WTC11 (cell line): ENCODE measurements at regions of chr1 and their contacts with region 1.

Region 1: GRCh38 chr1:27044613-27045151 is 32.0 kb upstream of the TENT5B start:
- DNase-seq: peak; percentile 97
- ATAC-seq: peak; percentile 78
- H3K4me3 Mint-ChIP-seq: peak overlapping the region; percentile 29
- H3K27ac Mint-ChIP-seq: no peak overlapping the region
- H3K4me1 Mint-ChIP-seq: peaks cover 58% of the 10 kb centered on the region
- H3K27me3 Mint-ChIP-seq: no peaks in the 10 kb centered on the region
- CTCF ChIP-seq: peak; percentile 97

Region 2: DNA sequence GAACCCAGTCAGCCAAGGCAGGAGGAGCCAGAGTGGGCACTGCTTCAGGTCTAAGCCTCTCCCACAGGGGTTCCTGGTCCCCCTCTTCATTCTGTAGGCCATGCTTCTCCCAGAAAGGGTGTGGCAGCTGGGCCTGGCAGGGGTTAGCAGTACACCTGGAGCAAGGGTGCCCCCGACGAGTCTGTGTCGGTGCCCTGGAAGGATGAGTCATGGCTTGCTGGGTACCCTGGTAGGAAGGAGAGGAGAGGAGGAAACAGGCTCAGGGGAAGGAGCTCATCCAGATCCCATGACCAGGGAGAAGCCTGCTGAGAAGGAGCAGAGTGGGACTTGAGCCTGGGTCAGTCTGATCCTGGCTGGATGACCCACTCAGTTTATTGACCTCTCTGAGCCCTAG is 94.8 kb before region 1 on chr1:
- CTCF ChIA-PET with region 1: no interaction called
- POLR2A ChIA-PET with region 1: no interaction called
- DNase-seq: no peak
- ATAC-seq: no peak
- H3K4me3 Mint-ChIP-seq: no peak overlapping the region
- H3K27ac Mint-ChIP-seq: no peak overlapping the region
- H3K4me1 Mint-ChIP-seq: no peaks in the 10 kb centered on the region
- H3K27me3 Mint-ChIP-seq: no peaks in the 10 kb centered on the region
- CTCF ChIP-seq: no peak

Region 3: GRCh38 chr1:26993237-26994019 is 51.3 kb before region 1 on chr1 and contains the start of gene TRNP1:
- CTCF ChIA-PET with region 1: interaction called, 190 read pairs
- POLR2A ChIA-PET with region 1: interaction called, 11 read pairs
- DNase-seq: peak; percentile 86
- ATAC-seq: peak; percentile 58
- H3K4me3 Mint-ChIP-seq: peak within 1 kb of the TSS; percentile 81
- H3K27ac Mint-ChIP-seq: peak within 1 kb of the TSS; percentile 97
- H3K4me1 Mint-ChIP-seq: peaks cover 57% of the 10 kb centered on the region
- H3K27me3 Mint-ChIP-seq: peaks cover 26% of the 10 kb centered on the region
- CTCF ChIP-seq: no peak
- total RNA-seq, gene TRNP1: 37.6 to 51.4 TPM (median 49.4 TPM) in 3 replicates

Region 4: GRCh38 chr1:27031235-27032118 is 13.2 kb before region 1 on chr1:
- CTCF ChIA-PET with region 1: interaction called, 76 read pairs
- POLR2A ChIA-PET with region 1: interaction called, 4 read pairs
- DNase-seq: peak; percentile 65
- ATAC-seq: peak; percentile 64
- H3K4me3 Mint-ChIP-seq: peak overlapping the region; percentile 49
- H3K27ac Mint-ChIP-seq: peak overlapping the region; percentile 84
- H3K4me1 Mint-ChIP-seq: peaks cover 38% of the 10 kb centered on the region
- H3K27me3 Mint-ChIP-seq: no peaks in the 10 kb centered on the region
- CTCF ChIP-seq: no peak

Region 5: DNA sequence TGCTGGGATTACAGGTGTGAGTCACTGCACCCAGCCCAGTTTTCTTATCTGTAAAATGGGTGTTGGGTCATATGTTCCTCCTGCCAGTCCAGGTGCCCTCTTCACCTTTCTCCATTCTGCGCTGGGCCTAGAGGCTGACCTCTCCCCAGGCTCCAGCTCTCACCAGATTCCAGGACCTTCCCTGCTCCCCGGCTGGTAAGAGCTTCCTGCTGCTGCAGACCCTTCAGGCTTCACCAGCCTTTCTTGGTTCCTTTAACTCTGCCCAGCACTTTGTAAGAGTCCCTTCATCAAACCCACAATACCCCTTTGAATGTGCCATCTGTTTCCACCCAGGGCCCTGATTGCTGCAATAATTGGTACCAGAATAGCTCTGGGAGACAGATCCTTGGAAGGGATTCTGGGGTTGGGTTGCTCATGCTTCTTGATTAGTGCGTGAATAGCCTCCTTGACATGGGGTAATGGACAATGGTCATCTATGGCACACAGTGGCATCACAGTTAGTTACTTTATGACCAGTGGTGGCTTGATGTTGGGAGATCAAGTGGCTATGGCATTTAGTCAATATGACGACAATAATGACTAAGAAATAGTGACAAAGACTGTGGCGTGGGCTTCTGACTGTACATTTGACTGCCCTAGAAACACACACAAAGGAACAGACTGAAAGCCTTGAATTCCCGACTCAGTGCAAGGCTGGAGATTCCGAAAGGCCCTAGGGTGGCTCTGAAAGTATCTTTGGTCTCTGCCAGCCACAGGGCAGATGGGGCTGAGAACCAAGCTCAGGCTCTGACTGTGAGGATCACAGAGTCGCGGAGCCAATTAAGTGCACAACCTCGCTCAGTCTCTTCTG is 42.9 kb after region 1 on chr1:
- CTCF ChIA-PET with region 1: interaction called, 636 read pairs
- POLR2A ChIA-PET with region 1: interaction called, 5 read pairs
- DNase-seq: no peak
- ATAC-seq: no peak
- H3K4me3 Mint-ChIP-seq: no peak overlapping the region
- H3K27ac Mint-ChIP-seq: no peak overlapping the region
- H3K4me1 Mint-ChIP-seq: peaks cover 6% of the 10 kb centered on the region; the same call in 1 of the 2 replicates
- H3K27me3 Mint-ChIP-seq: peaks cover 8% of the 10 kb centered on the region
- CTCF ChIP-seq: no peak

Region 6: GRCh38 chr1:27136998-27137542 is 92.4 kb after region 1 on chr1:
- CTCF ChIA-PET with region 1: interaction called, 10 read pairs
- POLR2A ChIA-PET with region 1: no interaction called
- DNase-seq: no peak
- ATAC-seq: peak; percentile 7; the same call in 1 of the 2 replicates
- H3K4me3 Mint-ChIP-seq: no peak overlapping the region
- H3K27ac Mint-ChIP-seq: peak overlapping the region; percentile 42; the same call in 1 of the 2 replicates
- H3K4me1 Mint-ChIP-seq: peaks cover 39% of the 10 kb centered on the region
- H3K27me3 Mint-ChIP-seq: no peaks in the 10 kb centered on the region
- CTCF ChIP-seq: no peak